Naive thymus-derived CD8-positive, alpha-beta T cell (primary cell): ENCODE measurements at regions of chr6 and their contacts with region 1.

Region 1: GRCh38 chr6:136289579-136290409 is at the start of gene BCLAF1:
- DNase-seq: peak; percentile 97 to 100 (median 100)
- ATAC-seq: peak; percentile 73 to 76
- H3K4me3 Mint-ChIP-seq: peak within 1 kb of the TSS; percentile 95 to 100 (median 99)
- H3K27ac Mint-ChIP-seq: peak within 1 kb of the TSS; percentile 99 to 100 (median 100)
- H3K4me1 Mint-ChIP-seq: peaks cover 21 to 58% (median 53%) of the 10 kb centered on the region in 4 donors
- H3K27me3 Mint-ChIP-seq: peaks cover 0 to 10% (median 0%) of the 10 kb centered on the region in 5 donors
- polyA plus RNA-seq, gene BCLAF1: 119 to 127 (median 125) TPM

Region 2: DNA sequence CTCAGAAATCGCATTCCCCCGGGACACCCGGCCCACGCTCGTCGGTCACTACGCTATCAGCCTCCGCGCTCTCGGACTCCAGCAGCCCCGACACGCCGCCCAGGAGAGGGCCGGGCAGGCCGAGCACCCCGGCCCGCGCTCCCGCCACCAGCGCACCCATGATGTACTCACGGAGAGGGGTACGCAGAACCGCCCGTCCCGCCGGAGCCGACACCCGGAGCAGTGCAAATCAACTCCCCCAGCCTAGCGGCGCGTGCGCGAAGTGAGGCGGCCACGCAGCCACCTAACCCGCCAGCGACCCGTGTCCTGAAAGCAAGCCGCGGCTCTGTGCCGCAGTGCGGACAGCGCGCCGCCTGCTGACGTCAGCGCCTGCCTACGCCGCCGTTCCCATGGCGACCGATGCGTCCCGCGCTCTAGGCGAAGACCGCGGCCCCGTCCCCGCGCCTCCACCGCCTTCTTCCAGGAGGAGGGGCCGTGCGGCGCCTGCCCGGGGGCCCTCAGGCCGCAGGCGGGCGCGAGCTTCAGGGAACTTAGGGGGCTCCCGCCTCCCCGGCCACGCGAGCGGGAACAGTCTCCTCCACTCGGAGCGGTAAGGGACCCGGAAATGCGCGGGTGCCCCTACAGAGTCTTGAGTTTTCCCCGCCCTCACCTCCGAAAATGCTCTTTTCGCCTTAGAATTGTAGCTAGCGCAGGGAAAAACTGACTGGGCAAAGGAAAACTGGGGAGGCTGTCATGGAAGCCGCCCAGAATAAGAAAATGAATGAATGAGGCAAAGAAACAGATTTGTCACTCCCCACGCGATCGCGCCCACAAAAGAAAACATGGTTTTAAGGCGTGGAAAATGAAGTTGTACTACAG is 792.2 kb before region 1 on chr6 and contains the start of gene AHI1:
- POLR2A ChIA-PET with region 1: interaction called, 36 read pairs
- DNase-seq: peak; percentile 82 to 95 (median 88)
- ATAC-seq: peak; percentile 78 to 83
- H3K4me3 Mint-ChIP-seq: peak within 1 kb of the TSS in 5 of 10 donors; percentile 7 to 58 (median 31)
- H3K27ac Mint-ChIP-seq: peak within 1 kb of the TSS in 1 of 10 donors; percentile 4
- H3K4me1 Mint-ChIP-seq: peaks cover 2 to 15% (median 6%) of the 10 kb centered on the region in 4 donors
- H3K27me3 Mint-ChIP-seq: no peaks in the 10 kb centered on the region
- polyA plus RNA-seq, gene AHI1: 2.3 to 4.9 (median 3.5) TPM

Region 3: DNA sequence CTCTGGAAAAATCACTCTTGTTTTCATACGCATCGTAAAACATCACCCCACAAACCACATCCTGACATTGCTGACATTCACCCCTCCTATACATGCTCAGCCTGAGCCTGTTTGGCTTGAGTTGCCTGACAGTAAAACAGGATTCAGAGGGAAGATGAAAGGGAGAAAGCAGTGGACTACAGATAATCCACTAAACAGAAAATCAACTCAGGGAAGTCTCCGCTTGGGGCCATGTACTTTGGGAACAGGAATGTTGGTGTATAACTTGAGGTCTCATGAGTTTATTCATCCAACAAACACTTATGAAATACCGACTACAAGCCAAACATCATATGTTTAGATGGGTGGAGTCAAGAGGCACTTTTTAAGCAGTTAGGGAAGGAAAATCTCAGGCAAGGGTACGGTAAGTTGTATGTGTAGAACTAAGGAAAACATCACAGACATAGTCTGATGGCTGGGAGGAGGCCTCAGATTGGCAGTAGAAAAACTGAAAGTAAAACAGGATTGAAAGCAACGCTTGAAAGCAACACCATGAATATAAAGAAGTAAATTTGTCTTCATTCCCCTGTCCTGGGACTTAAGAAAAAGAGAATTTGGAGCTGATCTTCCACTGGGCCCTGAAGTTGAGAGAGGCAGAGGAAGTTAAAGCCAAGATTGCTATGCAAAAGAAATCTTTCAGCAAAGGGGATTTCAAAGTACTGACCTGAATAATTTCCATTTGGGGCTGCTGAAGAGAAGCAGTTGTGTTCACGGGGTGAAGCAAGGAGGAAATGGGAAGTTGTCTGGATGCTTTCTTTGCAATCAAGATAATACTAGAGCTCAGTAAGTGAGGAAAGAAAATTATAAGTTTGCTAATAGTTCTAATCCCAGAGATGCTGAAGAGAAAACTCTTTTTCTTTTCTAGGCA is 409.5 kb before region 1 on chr6:
- POLR2A ChIA-PET with region 1: interaction called, 10 read pairs
- DNase-seq: peak; percentile 5 to 84 (median 64)
- ATAC-seq: peak; percentile 88
- H3K4me3 Mint-ChIP-seq: peak overlapping the region; percentile 74 to 87 (median 82)
- H3K27ac Mint-ChIP-seq: peak overlapping the region; percentile 91 to 99 (median 98)
- H3K4me1 Mint-ChIP-seq: peaks cover 28 to 75% (median 64%) of the 10 kb centered on the region in 4 donors
- H3K27me3 Mint-ChIP-seq: no peaks in the 10 kb centered on the region

Region 4: GRCh38 chr6:136274062-136274461 is 15.7 kb before region 1 on chr6:
- POLR2A ChIA-PET with region 1: interaction called, 26 read pairs
- DNase-seq: no peak
- ATAC-seq: no peak
- H3K4me3 Mint-ChIP-seq: no peak overlapping the region
- H3K27ac Mint-ChIP-seq: peak overlapping the region in 3 of 10 donors; percentile 30 to 73 (median 71)
- H3K4me1 Mint-ChIP-seq: peaks cover 13 to 48% (median 38%) of the 10 kb centered on the region in 4 donors
- H3K27me3 Mint-ChIP-seq: no peaks in the 10 kb centered on the region

Region 5: DNA sequence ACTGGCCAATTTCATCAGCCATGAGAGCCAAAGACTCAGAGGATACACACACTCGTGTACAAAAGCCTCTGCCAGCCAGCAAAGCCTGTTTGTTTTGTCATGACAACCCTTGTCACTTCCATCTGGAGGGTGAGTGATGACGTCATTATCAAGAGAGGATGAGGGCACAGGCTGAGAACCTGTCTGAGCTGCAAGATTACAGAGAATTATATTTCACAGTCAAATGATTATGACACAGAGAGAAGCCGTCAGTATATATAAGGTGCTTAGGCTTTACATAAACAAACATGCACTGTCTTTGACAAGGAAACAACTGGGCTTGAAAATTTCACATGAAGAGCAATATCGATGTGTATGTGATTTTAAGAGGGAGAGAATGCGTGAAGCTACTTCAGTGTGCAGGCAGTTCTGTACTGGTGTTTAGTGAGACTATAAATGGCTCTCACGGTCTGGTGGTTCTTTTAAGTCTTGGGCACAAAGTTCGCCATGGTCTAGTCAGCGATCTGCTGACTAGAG is 36.3 kb after region 1 on chr6:
- POLR2A ChIA-PET with region 1: no interaction called
- DNase-seq: no peak
- ATAC-seq: peak in 1 of 2 donors; percentile 29
- H3K4me3 Mint-ChIP-seq: no peak overlapping the region
- H3K27ac Mint-ChIP-seq: no peak overlapping the region
- H3K4me1 Mint-ChIP-seq: no peaks in the 10 kb centered on the region
- H3K27me3 Mint-ChIP-seq: no peaks in the 10 kb centered on the region

Region 6: DNA sequence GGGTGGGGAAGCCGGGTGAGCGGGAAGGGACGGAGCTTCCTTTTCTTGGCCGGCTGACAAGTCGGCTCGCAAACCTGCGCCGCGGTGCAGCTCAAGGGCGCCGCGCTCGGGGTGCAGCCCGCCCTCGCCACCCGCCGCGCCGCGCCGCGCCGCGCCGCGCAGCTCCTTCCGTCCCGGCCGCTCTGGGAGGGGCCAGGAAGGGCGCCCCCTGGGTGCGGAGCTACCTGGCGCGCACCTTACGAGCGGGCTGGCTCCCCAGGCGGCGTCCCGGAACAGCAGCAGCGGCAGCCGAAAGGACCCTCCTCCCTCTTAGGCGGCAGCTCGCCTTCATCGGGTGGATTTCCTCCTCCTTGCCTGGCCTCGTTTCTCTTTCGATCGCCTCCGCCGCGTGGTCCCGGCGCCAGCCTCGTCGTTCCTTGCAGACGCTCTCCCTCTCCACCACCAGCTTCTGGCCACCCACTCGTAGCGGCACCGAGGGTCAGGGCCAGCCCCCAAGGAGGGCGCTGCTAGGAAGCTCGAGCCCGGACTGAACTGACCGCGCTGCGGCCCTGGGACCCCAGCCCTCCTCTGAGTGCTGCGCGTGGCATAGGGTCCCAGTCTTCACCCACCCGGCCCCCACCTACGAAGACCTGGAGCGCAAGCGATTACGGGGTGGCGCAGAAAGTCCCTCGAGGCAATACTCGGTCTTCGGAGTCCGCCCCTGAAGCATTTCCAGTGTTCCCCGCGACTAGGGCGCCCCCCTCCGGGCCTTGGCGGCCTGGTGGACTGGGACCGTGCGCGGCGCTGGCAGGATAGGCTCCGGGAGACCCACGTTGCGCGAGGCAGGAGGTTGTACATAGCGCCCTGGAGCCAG is 502.8 kb after region 1 on chr6 and contains the start of gene MAP3K5:
- POLR2A ChIA-PET with region 1: interaction called, 35 read pairs
- DNase-seq: peak; percentile 87 to 97 (median 94)
- ATAC-seq: peak; percentile 79 to 81
- H3K4me3 Mint-ChIP-seq: peak within 1 kb of the TSS; percentile 89 to 99 (median 92)
- H3K27ac Mint-ChIP-seq: peak within 1 kb of the TSS; percentile 86 to 98 (median 96)
- H3K4me1 Mint-ChIP-seq: peaks cover 17 to 40% (median 38%) of the 10 kb centered on the region in 4 donors
- H3K27me3 Mint-ChIP-seq: peaks cover 0 to 2% (median 0%) of the 10 kb centered on the region in 5 donors
- polyA plus RNA-seq, gene MAP3K5: 3.0 to 4.5 (median 3.1) TPM